WTC11 (cell line): ENCODE measurements at regions of chr17 and their contacts with region 1.

Region 1: GRCh38 chr17:1122533-1123392 is 57.0 kb downstream of the ABR start:
- DNase-seq: peak; percentile 91
- ATAC-seq: peak; percentile 90
- H3K4me3 Mint-ChIP-seq: no peak overlapping the region
- H3K27ac Mint-ChIP-seq: no peak overlapping the region
- H3K4me1 Mint-ChIP-seq: peaks cover 8% of the 10 kb centered on the region
- H3K27me3 Mint-ChIP-seq: peaks cover 2% of the 10 kb centered on the region
- CTCF ChIP-seq: peak; percentile 66

Region 2: DNA sequence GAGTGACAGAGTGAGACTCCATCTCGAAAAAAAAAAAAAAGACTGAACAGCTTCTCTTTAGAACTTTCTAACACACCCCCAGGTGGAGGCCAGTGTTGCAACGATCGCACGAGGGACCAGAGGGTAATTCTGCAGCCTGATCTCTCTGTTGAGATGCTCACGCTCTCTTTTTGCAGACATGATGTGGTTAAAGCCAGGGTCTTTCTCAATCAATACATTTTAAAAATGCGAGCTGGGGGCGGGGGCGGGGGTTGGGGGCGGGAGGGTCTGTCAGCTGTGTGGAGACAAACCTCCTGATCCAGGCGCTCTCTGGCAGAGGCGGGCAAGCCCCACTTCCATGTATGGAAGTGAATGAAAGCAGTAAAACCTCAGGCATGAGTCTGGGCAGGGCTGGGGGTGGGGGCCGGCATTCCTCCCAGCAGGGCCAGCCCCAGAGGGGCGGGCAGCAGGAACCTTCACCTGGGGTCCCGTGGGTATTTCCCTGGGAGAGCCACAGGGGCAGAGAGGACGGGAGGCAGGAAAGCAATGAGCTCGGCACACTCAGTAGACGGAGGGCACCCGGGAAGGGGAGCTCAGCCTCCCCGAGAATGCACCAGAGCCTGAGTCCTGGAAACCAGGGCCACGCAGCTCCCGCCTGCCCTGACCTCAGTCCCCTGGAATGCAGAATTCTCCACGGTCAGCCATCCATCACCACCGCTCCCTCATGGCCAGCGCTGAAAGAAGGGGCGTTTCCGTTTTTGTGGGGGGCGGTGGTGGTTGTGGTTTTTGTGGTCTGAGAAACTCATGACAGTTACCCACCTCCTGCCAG is 171.2 kb before region 1 on chr17:
- CTCF ChIA-PET with region 1: no interaction called
- POLR2A ChIA-PET with region 1: no interaction called
- DNase-seq: peak; percentile 78
- ATAC-seq: peak; percentile 86
- H3K4me3 Mint-ChIP-seq: peak overlapping the region; percentile 41; the same call in 1 of the 2 replicates
- H3K27ac Mint-ChIP-seq: peak overlapping the region; percentile 91
- H3K4me1 Mint-ChIP-seq: peaks cover 41% of the 10 kb centered on the region
- H3K27me3 Mint-ChIP-seq: no peaks in the 10 kb centered on the region
- CTCF ChIP-seq: no peak

Region 3: GRCh38 chr17:1108861-1109605 is 13.7 kb before region 1 on chr17:
- CTCF ChIA-PET with region 1: interaction called, 46 read pairs
- POLR2A ChIA-PET with region 1: no interaction called
- DNase-seq: peak; percentile 38
- ATAC-seq: peak; percentile 11
- H3K4me3 Mint-ChIP-seq: peak overlapping the region; percentile 72
- H3K27ac Mint-ChIP-seq: no peak overlapping the region
- H3K4me1 Mint-ChIP-seq: peaks cover 32% of the 10 kb centered on the region
- H3K27me3 Mint-ChIP-seq: peaks cover 12% of the 10 kb centered on the region
- CTCF ChIP-seq: no peak

Region 4: GRCh38 chr17:1147661-1148060 is 24.9 kb after region 1 on chr17:
- CTCF ChIA-PET with region 1: interaction called, 134 read pairs
- POLR2A ChIA-PET with region 1: no interaction called
- DNase-seq: peak; percentile 83
- ATAC-seq: peak; percentile 91
- H3K4me3 Mint-ChIP-seq: no peak overlapping the region
- H3K27ac Mint-ChIP-seq: no peak overlapping the region; the same call in 1 of the 2 replicates
- H3K4me1 Mint-ChIP-seq: peaks cover 2% of the 10 kb centered on the region; the same call in 1 of the 2 replicates
- H3K27me3 Mint-ChIP-seq: no peaks in the 10 kb centered on the region
- CTCF ChIP-seq: 0 out of 2 replicates have a peak, but pooled peaks have one; percentile 27

Region 5: GRCh38 chr17:1179818-1180742 is 57.3 kb after region 1 on chr17 and contains the start of gene ABR:
- CTCF ChIA-PET with region 1: interaction called, 21 read pairs
- POLR2A ChIA-PET with region 1: interaction called, 3 read pairs
- DNase-seq: peak; percentile 74
- ATAC-seq: peak; percentile 43
- H3K4me3 Mint-ChIP-seq: peak within 1 kb of the TSS; percentile 77
- H3K27ac Mint-ChIP-seq: no peak within 1 kb of the TSS
- H3K4me1 Mint-ChIP-seq: peaks cover 20% of the 10 kb centered on the region
- H3K27me3 Mint-ChIP-seq: peaks cover 43% of the 10 kb centered on the region
- CTCF ChIP-seq: no peak
- total RNA-seq, gene ABR: 38.0 to 43.7 TPM (median 41.0 TPM) in 3 replicates

Region 6: GRCh38 chr17:1197781-1198490 is 75.2 kb after region 1 on chr17:
- CTCF ChIA-PET with region 1: interaction called, 10 read pairs
- POLR2A ChIA-PET with region 1: no interaction called
- DNase-seq: no peak
- ATAC-seq: no peak
- H3K4me3 Mint-ChIP-seq: no peak overlapping the region
- H3K27ac Mint-ChIP-seq: no peak overlapping the region
- H3K4me1 Mint-ChIP-seq: no peaks in the 10 kb centered on the region
- H3K27me3 Mint-ChIP-seq: peaks cover 20% of the 10 kb centered on the region
- CTCF ChIP-seq: no peak